Caco-2 (cell line): ENCODE measurements at regions of chr7 and their contacts with region 1.

Region 1: DNA sequence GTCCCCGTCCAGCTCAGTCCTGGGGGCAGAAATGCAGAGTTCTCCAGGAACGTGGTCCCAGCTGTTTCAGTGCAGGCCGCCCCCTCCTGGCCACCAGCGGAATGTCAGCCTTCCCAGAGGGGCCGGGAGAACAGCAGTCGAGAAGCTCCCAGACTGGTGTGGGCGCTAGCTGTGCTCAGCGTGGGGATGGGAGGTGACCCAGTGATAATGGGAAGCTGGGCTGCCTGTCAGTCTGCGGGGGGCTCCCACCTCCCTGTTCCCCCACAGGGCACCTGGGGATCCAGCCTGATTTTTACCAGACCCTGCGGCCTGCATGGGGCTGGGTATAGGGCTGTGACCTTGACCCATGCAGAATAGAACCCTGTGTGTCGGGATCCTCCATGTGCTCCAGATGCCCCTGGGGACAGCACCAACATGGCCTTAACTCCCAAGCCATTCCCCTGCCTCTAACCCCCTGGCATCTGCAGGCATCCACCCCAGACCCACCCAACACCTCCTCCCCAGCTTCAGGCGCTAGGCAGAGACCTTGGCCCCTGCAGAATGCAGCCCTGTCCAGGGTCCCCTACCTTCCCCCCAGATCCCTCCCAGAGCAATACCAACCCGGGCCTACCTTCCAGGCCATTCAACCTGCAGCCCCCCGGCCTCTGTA is 946 bp upstream of the ELN start:
- DNase-seq: peak; percentile 69 to 78
- H3K4me3 ChIP-seq: no peak overlapping the region
- H3K4me3 Mint-ChIP-seq: no peak overlapping the region
- H3K27ac Mint-ChIP-seq: no peak overlapping the region
- H3K4me1 ChIP-seq: peaks cover 7% of the 10 kb centered on the region; the same call in 1 of the 2 replicates
- H3K4me1 Mint-ChIP-seq: peaks cover 9% of the 10 kb centered on the region
- H3K27me3 ChIP-seq: no peaks in the 10 kb centered on the region
- H3K27me3 Mint-ChIP-seq: no peaks in the 10 kb centered on the region
- CTCF ChIP-seq: peak; percentile 90 to 95

Region 2: DNA sequence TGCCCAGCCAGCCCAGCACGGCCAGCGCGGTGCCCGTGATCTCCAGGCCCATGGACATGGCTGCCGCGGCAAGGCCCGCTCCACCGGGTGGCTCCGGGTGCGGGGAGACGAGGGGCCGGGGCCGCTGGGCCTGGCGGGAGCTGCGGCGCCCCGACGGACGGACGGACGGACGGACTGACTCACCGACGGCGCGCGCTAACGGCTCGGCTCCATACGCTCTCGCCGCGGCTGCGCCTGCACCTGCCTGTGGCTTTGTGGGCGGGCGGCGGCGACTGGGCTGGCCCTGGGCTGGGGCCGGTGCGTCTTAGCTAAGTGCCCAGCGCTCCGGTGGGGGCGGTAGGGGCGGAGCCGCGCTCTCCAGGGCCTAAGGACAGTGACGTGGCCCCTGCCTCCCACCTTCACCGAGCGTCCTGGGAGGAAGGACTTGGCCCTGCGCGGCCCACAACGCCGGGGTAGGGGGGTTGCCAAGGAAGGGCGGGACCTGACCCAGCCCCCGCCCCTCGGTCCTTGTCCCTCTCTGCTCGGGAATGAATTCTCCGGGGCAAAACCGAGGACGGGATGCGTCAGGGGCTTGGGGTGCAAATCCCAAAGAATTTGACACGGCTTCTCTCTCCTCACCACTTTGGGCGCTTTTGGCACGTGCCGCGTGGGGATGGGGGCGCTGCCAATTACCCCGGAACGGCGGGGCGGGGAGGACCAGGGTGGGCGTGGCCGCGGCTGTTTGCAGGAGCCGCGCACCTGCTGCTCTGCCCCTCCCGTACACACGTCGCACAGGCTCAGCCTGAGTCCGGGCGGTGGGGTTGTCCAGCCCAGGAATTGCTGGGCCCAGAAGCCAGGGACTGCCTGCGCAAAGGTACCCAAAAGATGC is 256.8 kb before region 1 on chr7 and contains the start of gene CLDN3:
- CTCF ChIA-PET with region 1: no interaction called
- POLR2A ChIA-PET with region 1: no interaction called
- intact Hi-C with region 1: no loop called
- DNase-seq: peak; percentile 93 to 94
- H3K4me3 ChIP-seq: peak within 1 kb of the TSS; percentile 66
- H3K4me3 Mint-ChIP-seq: peak within 1 kb of the TSS; percentile 81
- H3K27ac Mint-ChIP-seq: peak within 1 kb of the TSS; percentile 73
- H3K4me1 ChIP-seq: peaks cover 15% of the 10 kb centered on the region
- H3K4me1 Mint-ChIP-seq: peaks cover 18% of the 10 kb centered on the region
- H3K27me3 ChIP-seq: no peaks in the 10 kb centered on the region
- H3K27me3 Mint-ChIP-seq: no peaks in the 10 kb centered on the region
- CTCF ChIP-seq: peak in 1 of 2 experiments; percentile 21
- total RNA-seq, gene CLDN3: 19.6 and 21.0 TPM in 2 replicates

Region 3: GRCh38 chr7:73865738-73866445 is 161.1 kb before region 1 on chr7:
- CTCF ChIA-PET with region 1: interaction called, 7 read pairs
- POLR2A ChIA-PET with region 1: no interaction called
- intact Hi-C with region 1: loop called (anchors 1 kb)
- DNase-seq: peak in 1 of 2 experiments; percentile 53
- H3K4me3 ChIP-seq: no peak overlapping the region
- H3K4me3 Mint-ChIP-seq: no peak overlapping the region
- H3K27ac Mint-ChIP-seq: no peak overlapping the region
- H3K4me1 ChIP-seq: peaks cover 10% of the 10 kb centered on the region
- H3K4me1 Mint-ChIP-seq: no peaks in the 10 kb centered on the region
- H3K27me3 ChIP-seq: no peaks in the 10 kb centered on the region
- H3K27me3 Mint-ChIP-seq: no peaks in the 10 kb centered on the region
- CTCF ChIP-seq: peak; percentile 53 to 68

Region 4: DNA sequence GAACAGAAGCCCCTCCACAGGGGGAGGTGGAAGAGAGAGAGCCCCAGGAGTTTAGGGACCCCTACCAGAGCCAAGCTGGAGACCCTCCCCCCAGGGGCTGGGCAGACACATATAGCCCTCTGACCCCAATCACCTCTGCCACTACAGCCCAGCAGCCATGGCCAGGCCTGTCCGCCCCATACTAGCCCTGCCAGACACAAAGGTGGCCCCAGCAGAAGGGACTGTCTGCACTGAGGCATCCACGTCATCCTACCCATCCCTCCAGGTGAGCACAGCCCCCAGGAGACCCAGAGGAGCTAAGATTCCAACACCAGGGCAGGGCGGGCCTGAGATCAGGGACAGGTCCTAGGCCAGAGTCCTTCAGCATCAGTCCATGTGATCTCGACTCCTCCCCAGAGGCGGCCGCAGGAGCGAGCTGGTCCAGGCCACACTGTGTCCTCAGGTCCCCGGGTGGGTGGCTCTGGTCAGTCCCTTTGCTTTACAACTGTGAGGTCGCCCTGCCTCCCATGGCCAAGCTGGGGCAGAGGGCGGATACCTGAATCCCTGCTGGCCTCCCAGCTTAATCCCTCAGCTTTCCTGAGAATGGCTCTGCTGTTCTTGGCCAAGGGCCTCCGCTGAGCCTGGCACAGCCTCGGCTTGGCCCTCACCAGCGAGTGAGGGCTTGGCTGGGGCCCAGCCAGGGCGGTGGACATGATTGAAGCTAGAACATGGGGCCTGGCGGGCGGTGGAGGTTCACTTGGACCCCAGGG is 13.3 kb before region 1 on chr7:
- CTCF ChIA-PET with region 1: interaction called, 11 read pairs
- POLR2A ChIA-PET with region 1: no interaction called
- intact Hi-C with region 1: no loop called
- DNase-seq: no peak
- H3K4me3 ChIP-seq: no peak overlapping the region
- H3K4me3 Mint-ChIP-seq: no peak overlapping the region
- H3K27ac Mint-ChIP-seq: no peak overlapping the region
- H3K4me1 ChIP-seq: no peaks in the 10 kb centered on the region
- H3K4me1 Mint-ChIP-seq: peaks cover 4% of the 10 kb centered on the region
- H3K27me3 ChIP-seq: no peaks in the 10 kb centered on the region
- H3K27me3 Mint-ChIP-seq: peaks cover under 1% of the 10 kb centered on the region
- CTCF ChIP-seq: no peak